CD8-positive, alpha-beta T cell (primary cell): ENCODE measurements at regions of chr13 and their contacts with region 1.

Region 1: GRCh38 chr13:113816946-113817859 is 46.7 kb downstream of the GAS6 start:
- DNase-seq: peak; percentile 74 to 93 (median 90)
- ATAC-seq: peak; percentile 97
- H3K4me3 ChIP-seq: no peak overlapping the region
- H3K4me3 Mint-ChIP-seq: peak overlapping the region; percentile 82
- H3K27ac ChIP-seq: no peak overlapping the region
- H3K27ac Mint-ChIP-seq: peak overlapping the region; percentile 52
- H3K4me1 ChIP-seq: peaks cover 10% of the 10 kb centered on the region
- H3K4me1 Mint-ChIP-seq: peaks cover 22% of the 10 kb centered on the region
- H3K27me3 ChIP-seq: no peaks in the 10 kb centered on the region
- H3K27me3 Mint-ChIP-seq: peaks cover 2% of the 10 kb centered on the region
- CTCF ChIP-seq: peak; percentile 90

Region 2: GRCh38 chr13:113904411-113904810 is 87.2 kb after region 1 on chr13:
- CTCF ChIA-PET with region 1: interaction called, 4 read pairs
- POLR2A ChIA-PET with region 1: no interaction called
- intact Hi-C with region 1: loop called (anchors 2 kb)
- DNase-seq: peak in 5 of 9 experiments; percentile 23 to 62 (median 44)
- ATAC-seq: peak; percentile 40
- H3K4me3 ChIP-seq: no peak overlapping the region
- H3K4me3 Mint-ChIP-seq: no peak overlapping the region
- H3K27ac ChIP-seq: no peak overlapping the region
- H3K27ac Mint-ChIP-seq: no peak overlapping the region
- H3K4me1 ChIP-seq: no peaks in the 10 kb centered on the region
- H3K4me1 Mint-ChIP-seq: peaks cover 10% of the 10 kb centered on the region
- H3K27me3 ChIP-seq: no peaks in the 10 kb centered on the region
- H3K27me3 Mint-ChIP-seq: peaks cover 8% of the 10 kb centered on the region
- CTCF ChIP-seq: no peak

Region 3: GRCh38 chr13:114004420-114005205 is 187.4 kb after region 1 on chr13:
- CTCF ChIA-PET with region 1: no interaction called
- POLR2A ChIA-PET with region 1: no interaction called
- intact Hi-C with region 1: loop called in 1 of 2 experiments (anchors 5 kb)
- DNase-seq: no peak
- ATAC-seq: no peak
- H3K4me3 ChIP-seq: no peak overlapping the region
- H3K4me3 Mint-ChIP-seq: no peak overlapping the region
- H3K27ac ChIP-seq: no peak overlapping the region
- H3K27ac Mint-ChIP-seq: peak overlapping the region; percentile 45
- H3K4me1 ChIP-seq: no peaks in the 10 kb centered on the region
- H3K4me1 Mint-ChIP-seq: no peaks in the 10 kb centered on the region
- H3K27me3 ChIP-seq: no peaks in the 10 kb centered on the region
- H3K27me3 Mint-ChIP-seq: no peaks in the 10 kb centered on the region
- CTCF ChIP-seq: no peak

Region 4: GRCh38 chr13:114019367-114019766 is 202.2 kb after region 1 on chr13:
- CTCF ChIA-PET with region 1: no interaction called
- POLR2A ChIA-PET with region 1: no interaction called
- intact Hi-C with region 1: loop called in 1 of 2 experiments (anchors 10 kb)
- DNase-seq: peak in 6 of 9 experiments; percentile 21 to 65 (median 50)
- ATAC-seq: peak; percentile 68
- H3K4me3 ChIP-seq: no peak overlapping the region
- H3K4me3 Mint-ChIP-seq: no peak overlapping the region
- H3K27ac ChIP-seq: no peak overlapping the region
- H3K27ac Mint-ChIP-seq: no peak overlapping the region
- H3K4me1 ChIP-seq: no peaks in the 10 kb centered on the region
- H3K4me1 Mint-ChIP-seq: no peaks in the 10 kb centered on the region
- H3K27me3 ChIP-seq: no peaks in the 10 kb centered on the region
- H3K27me3 Mint-ChIP-seq: no peaks in the 10 kb centered on the region
- CTCF ChIP-seq: no peak

Region 5: GRCh38 chr13:114065141-114065925 is 248.1 kb after region 1 on chr13:
- CTCF ChIA-PET with region 1: interaction called, 3 read pairs
- POLR2A ChIA-PET with region 1: no interaction called
- intact Hi-C with region 1: loop called (anchors 5 kb)
- DNase-seq: peak; percentile 29 to 84 (median 76)
- ATAC-seq: peak; percentile 68
- H3K4me3 ChIP-seq: peak overlapping the region; percentile 37 to 72
- H3K4me3 Mint-ChIP-seq: peak overlapping the region; percentile 84
- H3K27ac ChIP-seq: peak overlapping the region; percentile 29 to 78
- H3K27ac Mint-ChIP-seq: peak overlapping the region; percentile 96
- H3K4me1 ChIP-seq: peaks cover 63% of the 10 kb centered on the region
- H3K4me1 Mint-ChIP-seq: peaks cover 67% of the 10 kb centered on the region
- H3K27me3 ChIP-seq: no peaks in the 10 kb centered on the region
- H3K27me3 Mint-ChIP-seq: no peaks in the 10 kb centered on the region
- CTCF ChIP-seq: no peak

Region 6: GRCh38 chr13:114143806-114144605 is 326.8 kb after region 1 on chr13:
- CTCF ChIA-PET with region 1: no interaction called
- POLR2A ChIA-PET with region 1: no interaction called
- intact Hi-C with region 1: loop called in 1 of 2 experiments (anchors 2 kb)
- DNase-seq: peak in 7 of 9 experiments; percentile 46 to 81 (median 73)
- ATAC-seq: peak; percentile 15
- H3K4me3 ChIP-seq: peak overlapping the region in 1 of 2 experiments; percentile 23
- H3K4me3 Mint-ChIP-seq: no peak overlapping the region
- H3K27ac ChIP-seq: peak overlapping the region; percentile 80 to 86
- H3K27ac Mint-ChIP-seq: no peak overlapping the region
- H3K4me1 ChIP-seq: peaks cover 85% of the 10 kb centered on the region
- H3K4me1 Mint-ChIP-seq: peaks cover 12% of the 10 kb centered on the region
- H3K27me3 ChIP-seq: no peaks in the 10 kb centered on the region
- H3K27me3 Mint-ChIP-seq: no peaks in the 10 kb centered on the region
- CTCF ChIP-seq: peak; percentile 30

Region 7: DNA sequence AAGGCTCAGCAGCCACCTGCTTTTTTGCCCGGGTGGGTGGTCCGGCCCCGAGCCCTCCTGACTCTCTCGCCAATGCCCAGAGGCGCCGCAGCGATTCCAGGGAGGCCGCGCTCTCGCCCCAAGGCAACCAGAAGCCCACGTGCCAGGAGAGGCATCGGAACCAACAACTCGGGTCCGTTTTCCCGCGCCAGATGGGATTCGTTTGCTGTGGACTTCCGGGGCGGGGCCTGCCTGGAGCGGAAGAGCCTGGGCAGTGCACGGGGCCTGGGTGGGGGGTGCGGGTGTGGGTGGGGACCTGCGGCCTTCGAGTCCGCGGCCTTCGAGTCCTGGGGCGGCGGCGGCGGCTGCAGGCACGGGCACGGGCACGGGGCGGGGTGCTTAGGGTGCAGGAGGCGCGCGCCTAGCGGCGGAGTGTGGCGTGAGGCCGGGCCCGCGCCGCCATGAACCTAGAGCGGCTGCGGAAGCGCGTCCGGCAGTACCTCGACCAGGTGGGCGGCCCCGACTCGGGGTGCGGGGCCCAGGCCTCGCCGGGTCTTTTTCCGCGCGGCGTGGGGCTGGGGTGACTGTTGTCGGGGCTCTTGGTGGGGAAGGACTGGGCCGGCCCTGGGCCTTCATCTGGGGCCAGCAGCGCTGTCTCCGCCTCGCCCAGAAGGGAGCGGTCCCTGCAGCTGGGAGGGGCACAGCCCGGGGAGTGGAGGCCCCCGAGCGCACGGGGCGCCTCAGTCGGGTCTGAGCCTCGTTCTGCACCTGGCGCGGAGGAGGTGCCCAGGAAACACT is 417.6 kb after region 1 on chr13 and contains the start of gene CDC16:
- CTCF ChIA-PET with region 1: no interaction called
- POLR2A ChIA-PET with region 1: no interaction called
- intact Hi-C with region 1: loop called in 1 of 2 experiments (anchors 2 kb)
- DNase-seq: peak; percentile 57 to 93 (median 83)
- ATAC-seq: peak; percentile 84
- H3K4me3 ChIP-seq: peak within 1 kb of the TSS; percentile 76 to 80
- H3K4me3 Mint-ChIP-seq: peak within 1 kb of the TSS; percentile 88
- H3K27ac ChIP-seq: peak within 1 kb of the TSS; percentile 61 to 62
- H3K27ac Mint-ChIP-seq: peak within 1 kb of the TSS; percentile 91
- H3K4me1 ChIP-seq: peaks cover 17% of the 10 kb centered on the region
- H3K4me1 Mint-ChIP-seq: peaks cover 29% of the 10 kb centered on the region
- H3K27me3 ChIP-seq: no peaks in the 10 kb centered on the region
- H3K27me3 Mint-ChIP-seq: peaks cover 5% of the 10 kb centered on the region
- CTCF ChIP-seq: peak; percentile 37
- total RNA-seq, gene CDC16: 55.6 to 56.2 TPM